CD8-positive, alpha-beta T cell (primary cell): ENCODE measurements at regions of chr14 and their contacts with region 1.

Region 1: GRCh38 chr14:60980811-60981632 is at the starts of genes SLC38A6 and TRMT5:
- DNase-seq: peak; percentile 79 to 94 (median 91)
- ATAC-seq: peak; percentile 88
- H3K4me3 ChIP-seq: peak within 1 kb of the TSS; percentile 94 to 98
- H3K4me3 Mint-ChIP-seq: no peak within 1 kb of the TSS
- H3K27ac ChIP-seq: peak within 1 kb of the TSS; percentile 90 to 92
- H3K27ac Mint-ChIP-seq: no peak within 1 kb of the TSS
- H3K4me1 ChIP-seq: peaks cover 23% of the 10 kb centered on the region
- H3K4me1 Mint-ChIP-seq: peaks cover 25% of the 10 kb centered on the region
- H3K27me3 ChIP-seq: no peaks in the 10 kb centered on the region
- H3K27me3 Mint-ChIP-seq: no peaks in the 10 kb centered on the region
- CTCF ChIP-seq: no peak
- total RNA-seq, gene SLC38A6: 8.3 to 8.5 TPM
- total RNA-seq, gene TRMT5: 1.8 to 1.9 TPM

Region 2: DNA sequence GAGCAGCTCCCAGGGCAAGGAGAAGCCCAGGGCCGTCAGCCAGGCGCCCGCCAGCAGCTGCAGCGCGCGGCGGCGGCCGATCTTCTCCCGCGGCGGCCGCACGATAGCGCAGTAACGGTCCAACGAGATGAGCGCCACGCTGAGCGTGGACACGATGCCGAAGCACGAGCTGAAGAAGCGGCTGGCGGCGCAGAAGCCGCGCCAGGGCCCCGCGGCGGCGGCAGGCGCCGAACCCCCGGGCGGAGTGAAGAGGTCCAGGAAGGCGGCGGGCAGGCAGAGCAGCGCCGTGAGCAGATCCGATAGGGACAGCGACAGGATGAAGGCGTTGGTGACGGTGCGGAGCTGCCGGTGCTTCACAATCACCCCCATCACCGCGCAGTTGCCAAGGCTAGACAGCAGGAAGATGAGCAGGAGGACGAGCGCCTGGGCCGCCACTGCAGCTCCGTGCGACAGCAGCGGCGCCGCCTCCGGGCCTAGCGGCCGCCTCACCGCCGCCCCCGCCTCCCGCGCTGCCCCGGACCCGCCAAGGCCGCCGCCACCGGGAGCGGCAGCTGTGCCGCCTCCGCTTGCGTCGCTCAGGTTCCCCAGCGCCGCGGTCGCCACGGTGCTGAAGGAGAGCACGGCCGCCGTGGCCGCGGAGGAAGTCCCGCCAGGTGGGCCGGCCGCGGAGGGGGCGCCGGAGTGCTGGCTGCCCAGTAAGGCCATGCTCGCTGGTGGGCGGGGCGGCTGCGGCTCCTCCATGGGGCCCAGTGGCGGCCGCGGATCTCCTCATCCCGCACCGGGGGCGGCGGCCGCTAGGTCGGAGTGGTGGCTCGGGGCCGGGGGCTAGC is 1516.3 kb before region 1 on chr14:
- CTCF ChIA-PET with region 1: no interaction called
- POLR2A ChIA-PET with region 1: no interaction called
- intact Hi-C with region 1: loop called in 1 of 2 experiments (anchors 5 kb)
- DNase-seq: peak; percentile 15 to 77 (median 55)
- ATAC-seq: peak; percentile 69
- H3K4me3 ChIP-seq: peak overlapping the region; percentile 50 to 56
- H3K4me3 Mint-ChIP-seq: peak overlapping the region; percentile 90
- H3K27ac ChIP-seq: peak overlapping the region in 1 of 2 experiments; percentile 42
- H3K27ac Mint-ChIP-seq: peak overlapping the region; percentile 58
- H3K4me1 ChIP-seq: peaks cover 9% of the 10 kb centered on the region
- H3K4me1 Mint-ChIP-seq: peaks cover 11% of the 10 kb centered on the region
- H3K27me3 ChIP-seq: no peaks in the 10 kb centered on the region
- H3K27me3 Mint-ChIP-seq: peaks cover 5% of the 10 kb centered on the region
- CTCF ChIP-seq: no peak

Region 3: GRCh38 chr14:60288279-60288678 is 692.7 kb before region 1 on chr14:
- CTCF ChIA-PET with region 1: no interaction called
- POLR2A ChIA-PET with region 1: no interaction called
- intact Hi-C with region 1: no loop called
- DNase-seq: no peak
- ATAC-seq: no peak
- H3K4me3 ChIP-seq: no peak overlapping the region
- H3K4me3 Mint-ChIP-seq: no peak overlapping the region
- H3K27ac ChIP-seq: no peak overlapping the region
- H3K27ac Mint-ChIP-seq: no peak overlapping the region
- H3K4me1 ChIP-seq: no peaks in the 10 kb centered on the region
- H3K4me1 Mint-ChIP-seq: no peaks in the 10 kb centered on the region
- H3K27me3 ChIP-seq: no peaks in the 10 kb centered on the region
- H3K27me3 Mint-ChIP-seq: no peaks in the 10 kb centered on the region
- CTCF ChIP-seq: no peak

Region 4: GRCh38 chr14:60724137-60724619 is 256.8 kb before region 1 on chr14 and contains the start of gene SIX4:
- CTCF ChIA-PET with region 1: no interaction called
- POLR2A ChIA-PET with region 1: no interaction called
- intact Hi-C with region 1: loop called in 1 of 2 experiments (anchors 5 kb)
- DNase-seq: peak in 3 of 9 experiments; percentile 10 to 37 (median 18)
- ATAC-seq: no peak
- H3K4me3 ChIP-seq: peak within 1 kb of the TSS; percentile 53 to 75
- H3K4me3 Mint-ChIP-seq: peak within 1 kb of the TSS; percentile 89
- H3K27ac ChIP-seq: no peak within 1 kb of the TSS
- H3K27ac Mint-ChIP-seq: no peak within 1 kb of the TSS
- H3K4me1 ChIP-seq: peaks cover 14% of the 10 kb centered on the region
- H3K4me1 Mint-ChIP-seq: peaks cover 21% of the 10 kb centered on the region
- H3K27me3 ChIP-seq: peaks cover 39 to 49% of the 10 kb centered on the region in 2 experiments
- H3K27me3 Mint-ChIP-seq: peaks cover 74% of the 10 kb centered on the region
- CTCF ChIP-seq: no peak
- total RNA-seq, gene SIX4: not detected

Region 5: GRCh38 chr14:60753264-60754119 is 227.5 kb before region 1 on chr14:
- CTCF ChIA-PET with region 1: no interaction called
- POLR2A ChIA-PET with region 1: no interaction called
- intact Hi-C with region 1: loop called in 1 of 2 experiments (anchors 5 kb)
- DNase-seq: peak; percentile 17 to 95 (median 55)
- ATAC-seq: peak; percentile 90
- H3K4me3 ChIP-seq: peak overlapping the region in 1 of 2 experiments; percentile 6
- H3K4me3 Mint-ChIP-seq: peak overlapping the region; percentile 64
- H3K27ac ChIP-seq: peak overlapping the region in 1 of 2 experiments; percentile 48
- H3K27ac Mint-ChIP-seq: peak overlapping the region; percentile 82
- H3K4me1 ChIP-seq: peaks cover 22% of the 10 kb centered on the region
- H3K4me1 Mint-ChIP-seq: peaks cover 38% of the 10 kb centered on the region
- H3K27me3 ChIP-seq: no peaks in the 10 kb centered on the region
- H3K27me3 Mint-ChIP-seq: peaks cover 4% of the 10 kb centered on the region
- CTCF ChIP-seq: no peak

Region 6: GRCh38 chr14:60789656-60790055 is 191.4 kb before region 1 on chr14:
- CTCF ChIA-PET with region 1: no interaction called
- POLR2A ChIA-PET with region 1: no interaction called
- intact Hi-C with region 1: no loop called
- DNase-seq: no peak
- ATAC-seq: no peak
- H3K4me3 ChIP-seq: no peak overlapping the region
- H3K4me3 Mint-ChIP-seq: no peak overlapping the region
- H3K27ac ChIP-seq: no peak overlapping the region
- H3K27ac Mint-ChIP-seq: no peak overlapping the region
- H3K4me1 ChIP-seq: no peaks in the 10 kb centered on the region
- H3K4me1 Mint-ChIP-seq: peaks cover 2% of the 10 kb centered on the region
- H3K27me3 ChIP-seq: no peaks in the 10 kb centered on the region
- H3K27me3 Mint-ChIP-seq: no peaks in the 10 kb centered on the region
- CTCF ChIP-seq: no peak

Region 7: DNA sequence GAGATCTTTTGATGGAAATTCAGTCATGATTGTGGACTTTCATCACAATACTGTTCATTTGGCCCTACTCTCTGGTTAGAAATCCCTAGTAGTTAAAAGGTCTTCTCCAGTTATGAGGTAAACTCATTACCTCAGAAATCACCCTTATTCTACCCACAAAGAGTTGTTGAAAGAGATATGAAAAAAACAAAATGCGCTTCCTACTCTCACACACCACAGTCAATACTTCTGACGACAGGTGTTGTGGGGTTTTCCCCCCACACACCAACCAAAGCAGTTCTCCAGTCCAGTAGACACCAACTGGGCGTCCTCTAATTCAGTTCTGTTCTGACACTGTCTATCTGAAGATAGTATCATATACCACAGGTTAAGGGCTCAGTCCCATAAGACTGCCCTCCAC is 55.0 kb before region 1 on chr14:
- CTCF ChIA-PET with region 1: no interaction called
- POLR2A ChIA-PET with region 1: no interaction called
- intact Hi-C with region 1: no loop called
- DNase-seq: no peak
- ATAC-seq: no peak
- H3K4me3 ChIP-seq: no peak overlapping the region
- H3K4me3 Mint-ChIP-seq: no peak overlapping the region
- H3K27ac ChIP-seq: no peak overlapping the region
- H3K27ac Mint-ChIP-seq: no peak overlapping the region
- H3K4me1 ChIP-seq: no peaks in the 10 kb centered on the region
- H3K4me1 Mint-ChIP-seq: no peaks in the 10 kb centered on the region
- H3K27me3 ChIP-seq: no peaks in the 10 kb centered on the region
- H3K27me3 Mint-ChIP-seq: no peaks in the 10 kb centered on the region
- CTCF ChIP-seq: no peak

Region 8: DNA sequence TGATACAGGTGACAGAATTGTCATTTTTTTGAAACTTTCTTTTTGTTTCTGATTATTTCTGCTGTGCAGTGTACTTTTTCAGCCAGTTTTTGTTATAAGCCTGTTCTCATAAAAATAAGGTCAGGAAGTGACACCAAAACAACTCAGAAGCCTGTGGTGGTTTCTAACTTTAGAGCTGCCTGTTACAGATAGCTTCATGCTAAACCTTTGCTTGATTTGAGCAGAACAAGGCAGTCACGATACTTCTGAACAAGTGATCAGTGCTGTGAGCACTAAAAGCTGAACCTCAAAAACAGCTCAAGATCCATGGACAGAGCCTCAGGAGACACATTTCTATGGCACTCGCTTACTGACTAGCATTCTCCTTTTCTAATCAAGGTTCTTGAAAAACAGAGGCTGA is 422.4 kb after region 1 on chr14:
- CTCF ChIA-PET with region 1: no interaction called
- POLR2A ChIA-PET with region 1: no interaction called
- intact Hi-C with region 1: loop called in 1 of 2 experiments (anchors 10 kb)
- DNase-seq: peak in 3 of 9 experiments; percentile 35 to 79 (median 63)
- ATAC-seq: peak; percentile 77
- H3K4me3 ChIP-seq: peak overlapping the region in 1 of 2 experiments; percentile 10
- H3K4me3 Mint-ChIP-seq: peak overlapping the region; percentile 62
- H3K27ac ChIP-seq: peak overlapping the region; percentile 15 to 82
- H3K27ac Mint-ChIP-seq: peak overlapping the region; percentile 95
- H3K4me1 ChIP-seq: peaks cover 89% of the 10 kb centered on the region
- H3K4me1 Mint-ChIP-seq: peaks cover 31% of the 10 kb centered on the region
- H3K27me3 ChIP-seq: no peaks in the 10 kb centered on the region
- H3K27me3 Mint-ChIP-seq: no peaks in the 10 kb centered on the region
- CTCF ChIP-seq: no peak

Region 9: GRCh38 chr14:62301911-62302310 is 1320.9 kb after region 1 on chr14:
- CTCF ChIA-PET with region 1: no interaction called
- POLR2A ChIA-PET with region 1: no interaction called
- intact Hi-C with region 1: no loop called
- DNase-seq: no peak
- ATAC-seq: no peak
- H3K4me3 ChIP-seq: no peak overlapping the region
- H3K4me3 Mint-ChIP-seq: no peak overlapping the region
- H3K27ac ChIP-seq: no peak overlapping the region
- H3K27ac Mint-ChIP-seq: no peak overlapping the region
- H3K4me1 ChIP-seq: no peaks in the 10 kb centered on the region
- H3K4me1 Mint-ChIP-seq: no peaks in the 10 kb centered on the region
- H3K27me3 ChIP-seq: no peaks in the 10 kb centered on the region
- H3K27me3 Mint-ChIP-seq: no peaks in the 10 kb centered on the region
- CTCF ChIP-seq: no peak